A549 (cell line): ENCODE measurements at regions of chr22 and their contacts with region 1.

Region 1: DNA sequence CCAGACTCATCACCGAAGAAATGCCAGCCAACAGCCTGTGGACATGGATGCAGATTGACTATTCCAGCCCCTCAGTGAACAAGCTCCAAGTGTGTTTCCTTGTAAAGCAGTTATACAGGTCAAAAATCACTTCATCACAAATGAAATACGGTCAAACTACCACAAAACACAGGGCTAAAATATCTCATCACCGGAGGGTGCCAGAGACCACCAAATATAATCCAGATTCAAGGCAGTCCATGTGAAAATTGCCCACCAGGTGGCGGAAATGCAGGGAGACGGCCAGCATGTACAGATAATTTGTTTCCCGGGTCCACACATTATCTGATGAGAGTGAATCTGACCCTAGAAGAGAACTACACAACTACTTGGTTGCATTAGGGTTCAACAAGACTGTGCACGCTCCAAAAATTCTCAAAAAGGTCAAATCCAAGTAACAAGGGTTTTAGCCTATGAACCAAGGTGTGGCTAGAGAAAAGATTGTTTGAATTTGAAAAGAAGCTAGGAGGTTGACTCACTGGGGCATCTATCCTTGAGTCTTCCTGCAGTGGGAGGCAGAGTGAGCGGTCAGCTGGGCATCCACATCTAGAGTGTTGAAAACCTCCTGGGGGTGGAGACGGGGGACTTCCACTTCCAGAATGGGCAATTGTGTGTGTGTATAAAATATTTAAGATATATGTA is 71.7 kb downstream of the IGLL5 start:
- DNase-seq: peak; percentile 40 to 66
- ATAC-seq: peak; percentile 71 to 84
- H3K4me3 ChIP-seq: no peak overlapping the region
- H3K27ac ChIP-seq: no peak overlapping the region
- H3K4me1 ChIP-seq: no peaks in the 10 kb centered on the region
- CTCF ChIP-seq: peak; percentile 93
- EP300 ChIP-seq: no peak
- POLR2A ChIP-seq: no peak
- RAD21 ChIP-seq: peak; percentile 90

Region 2: GRCh38 chr22:22463855-22464540 is 495.3 kb before region 1 on chr22:
- CTCF ChIA-PET with region 1: interaction called, 58 read pairs
- POLR2A ChIA-PET with region 1: no interaction called
- DNase-seq: peak; percentile 38 to 52
- ATAC-seq: peak; percentile 73 to 93; a peak in 5 of 6 replicates
- H3K4me3 ChIP-seq: peak overlapping the region; percentile 18; the same call in 1 of the 3 replicates
- H3K27ac ChIP-seq: no peak overlapping the region
- H3K4me1 ChIP-seq: no peaks in the 10 kb centered on the region
- CTCF ChIP-seq: peak; percentile 73
- EP300 ChIP-seq: no peak
- POLR2A ChIP-seq: no peak
- RAD21 ChIP-seq: peak; percentile 85 to 86

Region 3: DNA sequence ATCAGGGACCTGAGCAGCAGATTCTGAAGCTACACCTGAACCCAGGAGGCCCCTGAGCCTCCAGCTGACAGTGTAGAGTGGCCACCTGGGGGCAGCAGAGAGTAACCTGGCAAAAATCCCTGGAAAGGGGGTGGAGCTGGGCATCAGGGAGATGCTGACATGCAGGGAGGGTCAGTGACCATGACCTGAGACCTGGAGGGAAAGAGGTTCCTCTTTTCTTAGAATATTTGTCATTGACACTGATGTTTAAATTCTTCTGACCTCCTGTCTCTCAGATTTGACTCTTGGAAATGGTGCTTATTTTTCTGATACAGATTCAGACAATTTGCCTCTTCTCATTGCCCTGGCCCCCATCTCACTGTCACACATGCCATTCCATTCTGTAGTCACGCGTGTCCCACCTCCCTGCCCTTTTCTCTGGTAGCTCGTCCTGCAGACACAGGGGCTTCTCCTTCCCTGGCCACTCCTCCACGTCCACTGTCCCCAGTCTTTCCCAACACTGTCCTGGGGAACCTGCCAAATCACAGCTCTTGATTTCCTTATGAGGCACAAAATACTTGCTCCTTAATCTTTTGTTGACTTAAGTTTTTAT is 188.9 kb before region 1 on chr22:
- CTCF ChIA-PET with region 1: interaction called, 12 read pairs
- POLR2A ChIA-PET with region 1: no interaction called
- DNase-seq: peak; percentile 30 to 33
- ATAC-seq: peak; percentile 83 to 91
- H3K4me3 ChIP-seq: no peak overlapping the region
- H3K27ac ChIP-seq: no peak overlapping the region
- H3K4me1 ChIP-seq: no peaks in the 10 kb centered on the region
- CTCF ChIP-seq: peak; percentile 57
- EP300 ChIP-seq: no peak
- POLR2A ChIP-seq: no peak
- RAD21 ChIP-seq: peak in 1 of 2 experiments; percentile 23; a peak in 2 of 5 replicates

Region 4: GRCh38 chr22:22848364-22848866 is 110.9 kb before region 1 on chr22:
- CTCF ChIA-PET with region 1: interaction called, 35 read pairs
- POLR2A ChIA-PET with region 1: no interaction called
- DNase-seq: peak; percentile 18 to 38
- ATAC-seq: peak; percentile 87 to 98
- H3K4me3 ChIP-seq: no peak overlapping the region
- H3K27ac ChIP-seq: no peak overlapping the region
- H3K4me1 ChIP-seq: no peaks in the 10 kb centered on the region
- CTCF ChIP-seq: peak; percentile 72
- EP300 ChIP-seq: no peak
- POLR2A ChIP-seq: no peak
- RAD21 ChIP-seq: peak; percentile 56 to 63

Region 5: DNA sequence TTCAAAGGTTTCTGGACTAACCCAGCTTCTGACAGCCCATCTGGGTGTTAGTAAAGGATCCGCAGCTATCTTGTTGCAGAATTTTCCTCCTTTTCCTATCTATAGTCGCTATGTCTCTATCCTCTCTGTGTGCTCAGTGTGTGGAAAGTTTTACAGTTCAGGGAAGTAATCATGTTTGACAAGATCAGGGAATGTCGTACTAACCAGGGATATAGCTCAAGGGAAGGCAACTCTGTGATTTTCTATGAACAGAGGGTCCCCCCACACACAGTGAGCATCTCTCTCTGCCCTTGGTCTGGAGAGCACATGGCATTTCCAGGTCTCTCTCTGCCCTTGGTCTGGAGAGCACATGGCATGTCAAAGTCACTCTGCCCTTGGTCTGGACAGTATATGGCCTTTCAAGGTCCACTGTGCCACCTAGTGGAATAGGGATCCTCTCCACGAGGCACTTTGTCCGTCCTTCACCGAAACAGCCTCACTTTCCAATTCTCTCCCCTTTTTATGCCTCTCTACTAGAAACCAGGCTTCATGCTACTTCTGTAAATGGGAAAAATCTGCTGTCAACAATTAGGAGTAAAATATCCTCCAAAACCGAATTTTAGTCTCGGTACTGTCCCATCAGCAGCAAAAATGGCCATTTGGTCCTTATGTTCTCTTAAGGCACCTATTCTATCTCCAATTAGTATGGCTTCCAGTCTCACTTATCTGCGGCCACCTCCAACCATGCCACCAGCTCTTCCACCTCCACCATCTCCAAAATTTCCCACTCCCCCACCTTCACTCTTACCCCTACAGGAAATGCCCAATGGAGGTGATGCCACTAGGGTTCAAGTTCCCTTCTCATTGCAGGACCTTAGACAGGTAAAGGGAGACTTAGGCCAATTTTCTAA is 17.0 kb after region 1 on chr22:
- CTCF ChIA-PET with region 1: interaction called, 63 read pairs
- POLR2A ChIA-PET with region 1: no interaction called
- DNase-seq: no peak
- ATAC-seq: no peak
- H3K4me3 ChIP-seq: no peak overlapping the region
- H3K27ac ChIP-seq: no peak overlapping the region
- H3K4me1 ChIP-seq: no peaks in the 10 kb centered on the region
- CTCF ChIP-seq: no peak
- EP300 ChIP-seq: no peak
- POLR2A ChIP-seq: no peak
- RAD21 ChIP-seq: peak in 1 of 2 experiments; percentile 12; a peak in 1 of 5 replicates

Region 6: GRCh38 chr22:23119494-23120414 is 160.5 kb after region 1 on chr22:
- CTCF ChIA-PET with region 1: interaction called, 144 read pairs
- POLR2A ChIA-PET with region 1: no interaction called
- DNase-seq: no peak
- ATAC-seq: no peak
- H3K4me3 ChIP-seq: no peak overlapping the region
- H3K27ac ChIP-seq: no peak overlapping the region
- H3K4me1 ChIP-seq: no peaks in the 10 kb centered on the region
- CTCF ChIP-seq: no peak
- EP300 ChIP-seq: no peak
- POLR2A ChIP-seq: no peak
- RAD21 ChIP-seq: no peak